ENCODE measurements at regions of chr22 and their contacts with region 1.

Region 1: DNA sequence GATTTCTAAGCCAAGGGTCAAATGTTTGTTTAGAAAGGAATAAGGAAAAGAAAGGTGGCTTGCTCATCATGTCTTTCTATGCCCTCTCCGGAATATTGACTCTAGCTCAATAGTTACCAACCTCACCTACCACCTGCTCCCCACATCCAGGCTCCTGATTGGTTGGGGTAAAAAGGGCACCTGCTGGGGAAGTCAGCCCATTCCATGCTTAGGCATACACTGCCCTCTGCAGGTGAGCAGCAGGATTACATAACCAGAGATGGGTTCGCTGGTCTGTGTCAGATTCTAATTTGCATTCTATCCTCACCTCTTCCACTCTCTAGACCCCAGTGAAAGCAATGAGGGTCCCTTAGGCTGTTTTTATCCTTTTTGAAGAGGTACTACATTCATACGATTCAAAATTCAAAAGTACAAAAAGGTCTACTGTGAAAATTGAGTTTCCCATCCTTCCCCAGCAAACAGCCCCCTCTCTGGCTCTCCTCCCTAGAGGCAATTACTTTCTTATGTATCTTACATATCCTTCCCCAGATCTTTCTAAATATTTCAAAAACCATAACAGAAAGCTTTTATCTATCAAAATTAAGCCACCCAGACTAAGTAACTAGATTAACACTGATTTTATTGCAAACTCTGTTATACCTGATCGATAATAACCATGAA is 98.0 kb upstream of the ASPHD2 start:
- H3K4me3 ChIP-seq: no peak overlapping the region
- H3K27ac ChIP-seq: no peak overlapping the region
- H3K4me1 ChIP-seq: no peaks in the 10 kb centered on the region
- CTCF ChIP-seq: peak; percentile 68

Region 2: DNA sequence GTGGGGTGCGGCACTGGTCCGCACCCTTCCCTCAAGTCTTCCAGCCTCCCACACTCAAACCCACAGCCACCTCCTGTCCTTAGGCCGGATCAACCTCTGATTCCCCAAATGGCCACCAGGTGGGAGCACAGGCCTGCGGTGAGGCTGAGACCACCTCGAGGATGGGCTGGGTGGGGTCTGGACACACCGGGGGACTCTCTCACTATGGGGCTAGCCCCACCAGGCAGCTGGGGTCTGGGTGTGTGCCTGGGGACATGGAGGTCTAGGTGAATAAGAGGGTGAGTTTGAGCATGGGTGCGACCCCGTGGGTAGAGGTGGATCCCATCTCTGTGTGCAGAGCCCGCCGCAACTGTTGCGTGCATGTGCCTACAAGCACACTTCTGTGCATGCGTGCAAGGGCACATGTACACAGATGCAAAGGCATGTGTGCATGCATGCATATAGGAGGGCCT is 556.5 kb before region 1 on chr22:
- CTCF ChIA-PET with region 1: interaction called, 19 read pairs
- POLR2A ChIA-PET with region 1: no interaction called
- H3K4me3 ChIP-seq: no peak overlapping the region
- H3K27ac ChIP-seq: no peak overlapping the region
- H3K4me1 ChIP-seq: no peaks in the 10 kb centered on the region
- CTCF ChIP-seq: peak; percentile 57

Region 3: DNA sequence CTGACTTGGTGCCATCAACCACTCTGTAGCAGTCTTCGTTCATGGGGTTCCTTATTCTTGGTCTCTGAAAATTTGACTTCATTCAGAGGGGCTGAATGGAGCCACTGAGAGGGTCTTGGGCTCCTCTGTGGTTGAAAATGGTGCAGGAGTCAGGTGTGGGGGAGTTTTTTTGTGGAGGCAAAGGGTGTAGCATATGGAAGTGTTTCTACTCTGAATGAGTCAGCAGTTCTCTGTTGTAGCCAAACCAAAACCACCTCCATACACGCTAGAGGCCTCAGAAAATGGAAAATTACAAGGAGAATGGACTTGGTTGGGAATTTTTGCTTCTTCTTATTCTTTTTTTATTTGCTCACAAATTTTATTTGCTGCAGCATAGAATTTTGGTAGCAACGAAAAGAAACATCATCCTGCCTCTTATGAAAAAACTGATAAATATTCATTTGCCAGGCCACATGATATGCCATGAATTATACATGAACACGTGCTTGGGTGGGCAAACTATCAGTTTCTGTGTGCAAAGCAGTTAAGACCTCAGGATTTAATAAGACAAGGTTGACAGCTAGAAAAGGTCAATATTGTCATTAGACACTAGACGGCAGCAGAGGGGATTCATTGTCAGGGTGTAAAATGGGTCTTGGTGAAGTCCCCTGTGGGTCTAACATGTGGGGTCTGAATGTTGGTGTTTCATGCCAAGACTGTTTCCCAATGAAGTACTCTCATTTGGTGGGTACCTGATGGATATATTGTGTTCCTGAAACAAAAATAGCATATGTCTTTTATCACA is 477.4 kb before region 1 on chr22:
- CTCF ChIA-PET with region 1: interaction called, 14 read pairs
- POLR2A ChIA-PET with region 1: no interaction called
- H3K4me3 ChIP-seq: no peak overlapping the region
- H3K27ac ChIP-seq: no peak overlapping the region
- H3K4me1 ChIP-seq: no peaks in the 10 kb centered on the region
- CTCF ChIP-seq: peak; percentile 18; the same call in 1 of the 2 replicates

Region 4: DNA sequence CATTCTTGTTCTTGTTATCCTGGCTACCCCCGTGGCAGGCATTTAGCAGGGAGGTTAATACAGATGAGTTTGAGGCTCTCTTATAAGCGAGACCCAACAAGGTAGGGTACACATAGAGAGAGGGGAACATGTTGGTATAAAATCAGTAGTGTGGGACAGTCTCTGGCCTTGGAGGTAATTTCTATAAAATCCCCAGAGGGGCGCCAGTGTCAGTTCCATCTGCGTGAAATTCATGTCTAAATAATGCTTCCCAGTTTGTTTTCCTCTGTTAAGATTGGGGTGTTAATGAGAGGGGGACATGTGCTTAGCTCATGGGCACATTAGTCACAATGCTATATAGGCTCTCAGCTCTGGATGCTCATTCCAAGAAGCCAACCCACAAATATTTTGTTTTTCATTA is 438.4 kb before region 1 on chr22:
- CTCF ChIA-PET with region 1: interaction called, 13 read pairs
- POLR2A ChIA-PET with region 1: no interaction called
- H3K4me3 ChIP-seq: no peak overlapping the region
- H3K27ac ChIP-seq: no peak overlapping the region
- H3K4me1 ChIP-seq: no peaks in the 10 kb centered on the region
- CTCF ChIP-seq: no peak

Region 5: GRCh38 chr22:25898689-25899365 is 432.3 kb before region 1 on chr22:
- CTCF ChIA-PET with region 1: interaction called, 19 read pairs
- POLR2A ChIA-PET with region 1: no interaction called
- H3K4me3 ChIP-seq: no peak overlapping the region
- H3K27ac ChIP-seq: no peak overlapping the region
- H3K4me1 ChIP-seq: no peaks in the 10 kb centered on the region
- CTCF ChIP-seq: no peak

Region 6: DNA sequence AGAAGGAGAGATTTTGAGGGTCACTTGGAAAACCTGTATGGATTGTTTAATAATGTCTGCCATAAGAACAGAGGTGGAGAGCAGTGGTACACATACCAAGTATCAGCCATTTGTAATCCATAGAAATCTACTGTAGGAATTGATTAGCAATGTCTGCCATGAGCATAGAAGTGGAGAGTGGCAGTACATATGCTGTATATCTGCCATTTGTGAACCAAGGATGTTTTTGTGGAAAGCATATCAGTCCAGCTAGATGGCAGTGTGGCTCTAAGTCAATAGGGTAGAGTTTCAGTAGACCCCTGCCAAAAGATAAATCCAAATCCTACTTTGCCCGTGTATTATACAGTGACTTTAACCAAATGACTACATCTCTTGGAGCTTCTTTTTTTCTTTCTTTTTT is 244.7 kb before region 1 on chr22:
- CTCF ChIA-PET with region 1: interaction called, 10 read pairs
- POLR2A ChIA-PET with region 1: interaction called, 3 read pairs
- H3K4me3 ChIP-seq: no peak overlapping the region
- H3K27ac ChIP-seq: no peak overlapping the region
- H3K4me1 ChIP-seq: no peaks in the 10 kb centered on the region
- CTCF ChIP-seq: no peak

Region 7: GRCh38 chr22:26210334-26210733 is 120.8 kb before region 1 on chr22:
- CTCF ChIA-PET with region 1: no interaction called
- POLR2A ChIA-PET with region 1: no interaction called
- H3K4me3 ChIP-seq: no peak overlapping the region
- H3K27ac ChIP-seq: no peak overlapping the region
- H3K4me1 ChIP-seq: no peaks in the 10 kb centered on the region
- CTCF ChIP-seq: no peak

Region 8: GRCh38 chr22:26342745-26343410 is 11.8 kb after region 1 on chr22:
- CTCF ChIA-PET with region 1: interaction called, 21 read pairs
- POLR2A ChIA-PET with region 1: no interaction called
- H3K4me3 ChIP-seq: no peak overlapping the region
- H3K27ac ChIP-seq: no peak overlapping the region
- H3K4me1 ChIP-seq: no peaks in the 10 kb centered on the region
- CTCF ChIP-seq: no peak